ENCODE measurements at regions of chr4 and their contacts with region 1.

Region 1: GRCh38 chr4:61741327-61742096 is 541.4 kb downstream of the ADGRL3 start:
- DNase-seq: peak; percentile 33
- H3K4me3 ChIP-seq: no peak overlapping the region
- H3K27ac ChIP-seq: no peak overlapping the region
- H3K4me1 ChIP-seq: no peaks in the 10 kb centered on the region
- H3K27me3 ChIP-seq: no peaks in the 10 kb centered on the region
- CTCF ChIP-seq: peak; percentile 41
- EP300 ChIP-seq: no peak
- RAD21 ChIP-seq: peak; percentile 65

Region 2: DNA sequence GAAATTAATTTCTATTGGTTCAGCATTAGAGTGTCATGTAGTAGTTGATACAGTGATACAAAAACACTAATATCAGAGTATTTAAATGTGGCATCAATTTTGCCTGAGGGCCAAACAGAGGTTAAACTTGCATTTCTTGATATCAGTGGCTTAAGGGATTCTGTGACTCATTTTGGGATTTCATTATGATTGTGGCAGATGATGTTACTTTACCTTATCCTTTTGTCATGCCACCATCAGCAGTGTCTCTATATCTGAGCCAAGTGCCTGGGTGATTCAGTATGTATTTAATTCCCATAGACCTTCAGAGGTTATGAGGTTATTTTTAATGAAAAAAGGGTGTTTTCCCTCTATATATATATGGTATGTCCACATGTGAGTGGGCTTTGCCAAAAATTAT is 41.5 kb after region 1 on chr4:
- CTCF ChIA-PET with region 1: no interaction called
- POLR2A ChIA-PET with region 1: no interaction called
- DNase-seq: no peak
- H3K4me3 ChIP-seq: no peak overlapping the region
- H3K27ac ChIP-seq: no peak overlapping the region
- H3K4me1 ChIP-seq: no peaks in the 10 kb centered on the region
- H3K27me3 ChIP-seq: no peaks in the 10 kb centered on the region
- CTCF ChIP-seq: no peak
- EP300 ChIP-seq: no peak
- RAD21 ChIP-seq: no peak

Region 3: GRCh38 chr4:62709618-62710252 is 968.2 kb after region 1 on chr4:
- CTCF ChIA-PET with region 1: interaction called, 11 read pairs
- POLR2A ChIA-PET with region 1: no interaction called
- DNase-seq: peak; percentile 16
- H3K4me3 ChIP-seq: peak overlapping the region; percentile 17 to 27; a peak in 2 of 4 replicates
- H3K27ac ChIP-seq: no peak overlapping the region
- H3K4me1 ChIP-seq: no peaks in the 10 kb centered on the region
- H3K27me3 ChIP-seq: no peaks in the 10 kb centered on the region
- CTCF ChIP-seq: peak; percentile 76
- EP300 ChIP-seq: no peak
- RAD21 ChIP-seq: peak; percentile 84

Measured in SK-N-SH (cell line).